Activated CD4-positive, alpha-beta memory T cell treated with anti-CD3 and anti-CD28 coated beads, Interleukin-2, amount 10 ng/mL, durations not matched to agents 7 days and 5 days (primary cell): ENCODE measurements at regions of chr2 and their contacts with region 1.

Region 1: DNA sequence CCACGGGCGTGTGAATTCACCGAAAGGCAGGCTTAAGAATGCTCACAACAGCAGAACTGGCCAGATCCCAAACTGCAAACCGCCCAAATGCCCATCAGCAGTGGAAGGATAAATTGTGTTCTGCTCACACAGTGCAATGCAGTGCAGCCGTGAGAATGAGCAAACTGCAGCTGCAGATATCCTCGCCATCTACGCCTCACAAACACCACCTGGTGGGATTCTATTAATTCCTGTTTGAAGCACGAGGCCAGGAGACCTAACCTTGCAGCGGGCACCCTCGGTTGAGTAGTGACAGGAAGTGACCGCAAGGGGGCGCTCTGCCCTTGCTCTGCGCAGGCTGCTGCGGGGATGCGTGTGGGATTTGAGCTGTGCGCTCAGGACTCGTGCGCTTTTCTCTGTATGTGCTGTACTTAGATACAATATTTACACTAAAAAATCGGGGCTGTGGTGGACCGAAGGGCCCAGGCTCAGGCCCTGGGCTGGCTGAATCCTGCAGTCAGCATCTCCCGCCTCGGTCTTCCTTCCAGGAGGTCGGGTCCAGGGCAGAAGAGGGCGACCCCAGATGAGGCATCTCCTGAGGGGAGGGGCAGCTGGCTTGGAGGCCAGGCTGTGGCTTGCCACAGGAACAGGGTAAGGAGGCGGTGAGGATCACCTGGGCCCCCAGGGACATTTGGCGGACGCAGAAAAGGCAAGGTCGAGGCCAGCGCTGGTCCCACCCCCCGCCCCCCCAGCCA is 19.8 kb upstream of the PDIA6 start:
- DNase-seq: peak; percentile 82
- H3K4me3 Mint-ChIP-seq: no peak overlapping the region
- H3K27ac Mint-ChIP-seq: no peak overlapping the region
- H3K4me1 Mint-ChIP-seq: peaks cover 4% of the 10 kb centered on the region
- H3K27me3 Mint-ChIP-seq: peaks cover 16% of the 10 kb centered on the region

Region 2: DNA sequence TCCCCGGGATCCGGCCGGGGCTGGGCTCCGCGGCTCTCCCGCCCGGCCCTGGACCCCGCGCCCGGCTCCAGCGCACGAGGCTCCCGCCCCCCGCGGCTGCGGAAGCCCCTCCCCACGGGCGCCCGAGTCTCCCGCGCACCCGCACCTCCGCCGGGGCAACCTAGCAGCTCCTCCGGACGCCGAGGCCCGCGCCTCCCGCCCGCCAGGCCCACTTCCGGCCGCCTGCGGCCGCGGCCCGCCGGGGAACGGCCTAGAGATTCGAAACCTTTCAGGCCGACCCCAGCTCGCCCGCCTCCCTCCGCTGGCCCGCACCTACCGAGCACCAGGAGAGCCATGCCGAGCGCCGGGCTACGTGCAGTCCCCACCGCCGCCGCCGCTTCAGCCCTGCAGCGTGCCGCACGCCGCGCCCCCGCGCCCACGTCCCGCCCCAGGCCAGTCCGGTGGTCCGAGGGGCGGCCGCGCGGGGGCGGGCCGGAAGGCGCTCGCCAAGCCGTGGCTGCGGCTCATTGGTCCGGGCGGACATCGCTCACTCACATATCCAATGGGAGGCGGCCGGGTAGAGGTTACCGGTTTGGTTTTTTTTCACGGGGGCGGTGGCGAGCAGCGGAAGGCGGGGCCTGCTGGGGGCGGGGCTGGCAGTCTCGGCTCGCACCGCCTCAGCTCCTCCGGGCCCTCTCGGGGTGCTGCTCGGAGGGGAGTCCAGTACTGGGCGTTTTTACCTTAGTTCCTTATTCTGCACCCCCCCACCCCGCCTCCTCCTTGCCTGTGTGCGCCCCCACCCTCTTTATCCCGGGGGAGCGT is 19.8 kb before region 1 on chr2 and contains the start of gene PDIA6:
- CTCF ChIA-PET with region 1: interaction called, 11 read pairs
- POLR2A ChIA-PET with region 1: interaction called, 3 read pairs
- DNase-seq: peak; percentile 95
- H3K4me3 Mint-ChIP-seq: peak within 1 kb of the TSS; percentile 88
- H3K27ac Mint-ChIP-seq: peak within 1 kb of the TSS; percentile 89
- H3K4me1 Mint-ChIP-seq: peaks cover 37% of the 10 kb centered on the region
- H3K27me3 Mint-ChIP-seq: peaks cover 15% of the 10 kb centered on the region
- total RNA-seq, gene PDIA6: 161 to 165 TPM

Region 3: DNA sequence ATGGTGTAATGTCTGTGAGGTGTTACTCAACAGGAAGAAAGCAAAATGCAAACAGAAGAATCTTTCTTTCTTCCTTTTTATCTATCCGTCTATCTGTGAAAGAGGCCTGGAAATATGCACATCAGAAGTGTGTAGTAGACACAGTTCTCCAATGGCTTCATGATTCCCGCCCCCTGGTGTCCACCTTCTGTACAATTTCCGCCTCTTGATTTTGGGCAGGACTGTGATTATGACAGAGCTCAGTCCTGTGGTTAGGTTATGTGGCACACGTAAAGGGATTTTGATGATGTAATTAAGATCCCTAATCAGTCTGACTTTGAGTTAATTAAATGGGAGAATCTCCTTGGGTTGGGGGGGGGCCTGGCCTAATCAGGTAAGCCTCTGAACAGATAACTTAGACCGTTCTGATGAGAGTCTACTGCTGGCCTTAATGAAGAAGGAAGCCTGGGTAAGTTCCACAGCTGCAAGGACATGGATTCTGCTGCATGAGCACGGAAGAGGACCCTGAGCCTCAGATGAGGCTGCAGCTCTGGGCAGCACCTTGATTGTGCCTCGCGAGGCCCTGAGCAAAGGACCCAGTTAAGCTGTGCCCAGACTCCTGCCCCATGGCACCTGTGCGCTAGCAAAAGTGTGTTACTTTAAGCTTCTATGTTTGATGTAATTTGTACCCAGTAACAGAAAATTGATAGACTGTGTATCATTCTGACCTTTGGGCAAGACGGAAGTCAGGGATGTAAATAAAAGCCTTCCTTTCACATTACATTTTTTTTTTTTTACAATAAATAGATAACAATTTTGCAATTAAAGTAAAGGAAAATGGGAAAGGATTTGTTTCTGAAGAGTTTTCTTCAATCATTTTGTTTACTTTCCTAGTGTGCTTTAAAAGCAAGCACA is 68.1 kb after region 1 on chr2:
- CTCF ChIA-PET with region 1: interaction called, 10 read pairs
- POLR2A ChIA-PET with region 1: no interaction called
- DNase-seq: no peak
- H3K4me3 Mint-ChIP-seq: no peak overlapping the region
- H3K27ac Mint-ChIP-seq: no peak overlapping the region
- H3K4me1 Mint-ChIP-seq: no peaks in the 10 kb centered on the region
- H3K27me3 Mint-ChIP-seq: peaks cover 15% of the 10 kb centered on the region

Region 4: DNA sequence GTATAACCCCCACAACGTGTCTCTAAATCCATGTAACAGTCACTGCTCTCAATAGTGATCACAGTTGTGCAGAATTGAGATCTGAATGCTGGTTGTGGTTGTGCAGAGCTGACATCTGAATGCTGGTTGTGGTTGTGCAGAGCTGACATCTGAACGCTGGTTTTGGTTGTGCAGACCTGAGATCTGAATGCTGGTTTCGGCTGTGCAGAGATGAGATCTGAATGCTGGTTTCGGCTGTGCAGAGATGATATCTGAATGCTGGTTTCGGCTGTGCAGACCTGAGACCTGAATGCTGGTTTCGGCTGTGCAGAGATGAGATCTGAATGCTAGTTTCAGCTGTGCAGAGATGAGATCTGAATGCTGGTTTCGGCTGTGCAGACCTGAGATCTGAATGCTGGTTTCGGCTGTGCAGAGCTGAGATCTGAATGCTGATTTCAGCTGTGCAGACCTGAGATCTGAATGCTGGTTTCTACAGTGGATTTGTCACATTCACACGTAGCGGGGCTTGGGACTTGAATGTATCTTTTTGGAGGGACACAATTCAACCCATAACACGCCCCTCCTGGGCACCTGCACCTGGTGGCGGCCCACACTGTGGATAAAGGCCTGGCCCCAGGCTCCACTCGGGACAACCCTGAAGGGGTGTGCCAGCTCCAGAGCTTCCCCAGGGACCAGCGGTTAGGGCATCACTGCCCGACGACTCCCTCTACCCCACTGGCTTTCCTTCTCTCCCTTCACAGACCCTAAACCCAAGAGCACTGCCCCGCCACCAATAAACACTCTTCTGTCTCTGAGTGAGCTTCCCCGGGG is 271.8 kb after region 1 on chr2:
- CTCF ChIA-PET with region 1: interaction called, 11 read pairs
- POLR2A ChIA-PET with region 1: no interaction called
- DNase-seq: peak; percentile 73
- H3K4me3 Mint-ChIP-seq: peak overlapping the region; percentile 18
- H3K27ac Mint-ChIP-seq: peak overlapping the region; percentile 45
- H3K4me1 Mint-ChIP-seq: peaks cover 42% of the 10 kb centered on the region
- H3K27me3 Mint-ChIP-seq: peaks cover 32% of the 10 kb centered on the region

Region 5: GRCh38 chr2:11124503-11125068 is 292.2 kb after region 1 on chr2:
- CTCF ChIA-PET with region 1: interaction called, 72 read pairs
- POLR2A ChIA-PET with region 1: interaction called, 5 read pairs
- DNase-seq: peak; percentile 73
- H3K4me3 Mint-ChIP-seq: no peak overlapping the region
- H3K27ac Mint-ChIP-seq: no peak overlapping the region
- H3K4me1 Mint-ChIP-seq: peaks cover 9% of the 10 kb centered on the region
- H3K27me3 Mint-ChIP-seq: peaks cover 11% of the 10 kb centered on the region